Cardiac septum (tissue), 1 donor: ENCODE measurements at regions of chr12 and their contacts with region 1.

Region 1: GRCh38 chr12:53625946-53626701 is at the start of gene ATF7:
- DNase-seq: peak; percentile 99
- total RNA-seq, gene ATF7: 33.5 TPM

Region 2: DNA sequence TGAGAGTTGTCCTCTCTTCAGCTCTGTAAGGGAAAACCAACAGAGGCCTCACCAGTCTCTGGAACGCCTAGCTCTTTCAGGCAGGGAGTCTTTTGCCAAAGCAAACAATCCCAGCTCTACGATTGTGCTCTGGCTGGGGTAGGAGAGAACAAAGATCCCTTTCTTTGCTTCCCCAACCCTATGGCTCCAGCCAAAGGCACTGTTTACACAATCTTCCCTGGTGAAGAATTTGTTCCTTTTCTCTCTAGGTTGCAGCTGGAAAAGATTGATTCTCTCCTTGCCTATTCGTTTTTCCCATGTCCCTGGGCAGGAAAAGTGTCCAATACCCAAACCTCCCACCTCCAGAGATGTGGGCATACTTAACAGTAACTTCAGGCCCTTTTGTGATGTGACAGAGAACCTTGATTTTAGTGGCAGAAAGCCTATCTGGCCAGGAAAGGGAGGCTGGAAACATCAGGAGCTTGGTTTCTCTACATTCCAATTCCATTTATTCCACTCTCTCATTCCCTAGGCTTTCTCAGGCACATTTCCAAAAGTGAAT is 33.0 kb after region 1 on chr12:
- intact Hi-C with region 1: loop called (anchors 2 kb)
- DNase-seq: no peak

Region 3: DNA sequence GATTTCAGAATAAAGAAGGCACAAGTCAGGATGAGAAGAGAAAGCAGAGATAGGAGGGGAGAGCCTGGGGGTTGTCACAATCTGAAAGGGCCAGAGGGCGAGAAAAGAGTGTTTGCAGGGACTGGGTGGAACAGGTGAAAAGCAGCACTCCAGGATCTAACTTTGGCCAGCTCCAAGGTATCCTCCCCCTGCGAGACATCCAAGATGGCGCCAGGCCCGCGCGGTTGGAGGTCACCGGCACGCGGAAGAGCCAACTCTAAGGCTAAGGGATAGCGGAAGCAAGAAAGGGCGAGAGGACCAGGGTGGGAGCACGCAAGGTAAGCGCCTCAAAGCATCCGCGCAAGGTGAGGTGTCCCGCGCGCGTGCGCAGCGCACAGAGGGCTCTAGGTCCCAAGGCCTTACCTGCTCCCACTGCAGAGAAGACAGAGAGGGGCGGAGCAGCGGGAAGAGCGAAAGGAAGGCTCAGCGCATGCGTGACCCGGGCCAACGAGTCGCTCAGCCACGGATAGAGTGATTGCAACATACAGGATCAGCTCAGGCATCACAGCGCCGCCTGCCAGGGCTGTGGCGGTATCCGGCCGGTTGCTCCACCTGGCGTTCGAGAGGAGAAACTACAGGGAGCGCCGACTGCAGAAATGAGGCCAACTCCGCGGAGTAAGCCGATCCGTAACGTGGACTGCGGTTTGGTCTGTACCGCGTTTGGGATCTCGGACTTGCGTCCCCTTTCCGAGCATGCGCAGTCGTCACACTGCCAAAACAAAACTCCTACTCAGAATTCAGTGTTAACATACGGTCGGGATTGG is 49.7 kb after region 1 on chr12 and contains the start of gene ATP5MC2:
- intact Hi-C with region 1: loop called (anchors 1 kb)
- DNase-seq: peak; percentile 99
- total RNA-seq, gene ATP5MC2: 365 TPM